Activated B cell treated with CpG ODN at 0.5 μM for 24 hours (primary cell): ENCODE measurements at regions of chr13 and their contacts with region 1.

Region 1: GRCh38 chr13:110881839-110882627 is 32.8 kb downstream of the ANKRD10 start:
- DNase-seq: no peak
- ATAC-seq: no peak
- H3K4me3 Mint-ChIP-seq: no peak overlapping the region
- H3K27ac Mint-ChIP-seq: no peak overlapping the region
- H3K4me1 Mint-ChIP-seq: no peaks in the 10 kb centered on the region
- H3K27me3 Mint-ChIP-seq: no peaks in the 10 kb centered on the region
- CTCF ChIP-seq: no peak

Region 2: DNA sequence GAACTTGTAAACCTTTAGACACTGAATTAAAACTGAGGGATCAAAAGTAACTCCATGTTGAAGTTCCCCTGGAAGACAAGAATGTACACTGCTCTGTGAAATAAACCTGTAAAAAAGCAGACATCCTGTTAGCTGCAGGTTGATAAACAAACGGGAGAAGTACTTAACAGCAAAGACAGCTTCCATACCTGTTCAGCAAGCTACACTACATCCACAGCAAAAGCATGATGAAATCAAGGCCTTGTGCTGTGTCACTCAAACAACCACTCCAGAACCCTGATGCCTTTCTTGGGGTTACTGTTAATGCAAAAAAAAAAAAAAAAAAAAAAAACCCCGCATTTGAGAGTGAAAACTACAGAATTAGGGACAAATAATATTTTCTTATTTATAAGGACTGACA is 12.1 kb after region 1 on chr13:
- CTCF ChIA-PET with region 1: no interaction called
- POLR2A ChIA-PET with region 1: interaction called, 14 read pairs
- intact Hi-C with region 1: no loop called
- DNase-seq: no peak
- ATAC-seq: no peak
- H3K4me3 Mint-ChIP-seq: no peak overlapping the region
- H3K27ac Mint-ChIP-seq: no peak overlapping the region
- H3K4me1 Mint-ChIP-seq: no peaks in the 10 kb centered on the region
- H3K27me3 Mint-ChIP-seq: no peaks in the 10 kb centered on the region
- CTCF ChIP-seq: no peak

Region 3: GRCh38 chr13:110904748-110905147 is 22.7 kb after region 1 on chr13:
- CTCF ChIA-PET with region 1: no interaction called
- POLR2A ChIA-PET with region 1: no interaction called
- intact Hi-C with region 1: no loop called
- DNase-seq: no peak
- ATAC-seq: no peak
- H3K4me3 Mint-ChIP-seq: no peak overlapping the region
- H3K27ac Mint-ChIP-seq: no peak overlapping the region
- H3K4me1 Mint-ChIP-seq: peaks cover 31% of the 10 kb centered on the region
- H3K27me3 Mint-ChIP-seq: no peaks in the 10 kb centered on the region
- CTCF ChIP-seq: no peak